ENCODE measurements at regions of chr16 and their contacts with region 1.

Region 1: GRCh38 chr16:57757326-57757786 is 21.8 kb downstream of the KATNB1 start:
- DNase-seq: no peak
- ATAC-seq: peak; percentile 96
- H3K4me3 ChIP-seq: no peak overlapping the region
- H3K27ac ChIP-seq: no peak overlapping the region
- H3K4me1 ChIP-seq: peaks cover 0 to 3% of the 10 kb centered on the region in 2 experiments; a peak in 1 of 4 replicates
- H3K27me3 ChIP-seq: no peaks in the 10 kb centered on the region
- CTCF ChIP-seq: peak; percentile 92 to 97 (median 93)
- POLR2A ChIP-seq: no peak
- RAD21 ChIP-seq: peak; percentile 99

Region 2: DNA sequence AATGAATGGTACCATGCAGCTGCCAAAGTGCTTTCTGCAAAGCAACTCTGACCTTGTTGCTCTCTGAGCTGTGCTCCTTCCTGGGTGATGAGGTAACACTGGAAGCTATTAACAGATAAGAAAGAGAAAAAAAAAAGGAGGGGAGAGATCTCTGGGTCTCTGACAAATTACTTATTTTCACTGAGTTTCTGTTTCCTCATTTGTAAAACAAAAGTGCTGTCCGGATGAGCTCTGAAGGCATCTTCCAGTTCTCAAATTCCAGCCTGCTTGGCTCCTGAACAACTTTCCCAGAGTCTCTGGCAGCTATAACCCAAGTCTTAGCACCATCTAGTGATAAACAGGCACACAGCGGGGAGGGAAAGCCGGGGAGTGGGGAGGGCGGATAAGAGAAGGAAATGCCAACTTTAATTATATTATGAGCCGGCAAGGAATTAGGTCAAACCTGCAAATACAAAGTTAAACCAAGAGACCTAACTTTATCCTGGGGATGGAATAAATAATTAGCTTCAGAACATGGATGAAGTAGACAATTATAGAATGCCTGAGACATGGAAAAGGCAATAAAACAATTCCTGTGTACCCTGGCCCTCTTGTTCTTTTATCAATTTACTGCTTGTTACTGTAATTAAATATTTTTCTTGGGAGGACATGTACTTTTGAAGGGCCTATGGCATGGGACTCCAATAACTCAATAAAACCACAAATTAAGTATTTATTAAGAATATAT is 106.2 kb after region 1 on chr16:
- CTCF ChIA-PET with region 1: interaction called, 18 read pairs
- POLR2A ChIA-PET with region 1: no interaction called
- RAD21 ChIA-PET with region 1: interaction called in 1 of 2 experiments, 5 read pairs
- intact Hi-C with region 1: loop called (anchors 1 kb)
- DNase-seq: peak; percentile 45
- ATAC-seq: peak; percentile 84
- H3K4me3 ChIP-seq: no peak overlapping the region
- H3K27ac ChIP-seq: no peak overlapping the region
- H3K4me1 ChIP-seq: peaks cover 13 to 36% of the 10 kb centered on the region in 2 experiments; a peak in 3 of 4 replicates
- H3K27me3 ChIP-seq: no peaks in the 10 kb centered on the region
- CTCF ChIP-seq: peak; percentile 58 to 97 (median 70)
- POLR2A ChIP-seq: no peak
- RAD21 ChIP-seq: peak; percentile 96

Region 3: DNA sequence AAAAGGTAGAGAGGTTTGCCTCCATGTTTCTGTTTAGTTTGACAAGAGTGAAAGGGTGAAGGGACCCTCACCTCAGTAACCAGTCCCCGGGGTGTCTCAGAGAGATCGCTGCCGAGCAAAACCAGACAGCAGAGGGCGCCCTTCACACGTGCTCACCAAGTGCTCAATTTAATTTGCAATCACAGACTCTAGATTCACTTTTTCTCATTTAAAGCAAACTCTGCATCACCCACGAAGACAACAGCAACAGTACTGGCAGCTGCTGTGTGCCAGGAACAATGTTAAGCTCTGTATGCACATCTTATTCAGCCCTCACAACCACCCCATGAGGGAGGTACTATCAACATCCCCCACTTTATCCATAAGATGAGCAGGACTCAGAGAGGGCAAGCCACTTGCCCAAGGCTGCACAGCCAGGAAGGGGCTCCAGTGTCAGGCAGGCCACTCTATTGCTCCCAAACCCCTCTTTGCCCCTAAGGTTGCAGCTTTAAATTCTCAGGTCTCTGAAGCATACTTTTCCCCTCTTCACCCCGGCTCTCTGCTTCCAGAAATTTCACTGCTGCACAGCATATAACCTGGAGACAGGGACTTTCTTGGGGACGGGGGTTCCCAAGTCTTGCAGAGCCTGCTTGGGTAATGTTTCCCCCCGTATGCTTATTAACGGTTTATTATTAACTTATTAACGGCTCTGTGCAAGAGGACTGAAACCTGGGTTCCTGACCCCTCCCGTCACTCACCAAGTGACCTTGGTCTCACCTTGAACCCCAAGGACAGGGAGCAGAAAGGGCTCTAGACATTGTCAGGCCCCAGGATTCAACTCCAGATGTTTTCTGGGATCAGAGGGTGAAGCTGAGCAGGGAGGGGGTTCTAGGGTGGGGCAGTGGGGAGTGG is 142.7 kb after region 1 on chr16:
- CTCF ChIA-PET with region 1: interaction called, 3 read pairs
- POLR2A ChIA-PET with region 1: no interaction called
- RAD21 ChIA-PET with region 1: no interaction called
- intact Hi-C with region 1: loop called (anchors 10 kb)
- DNase-seq: peak; percentile 59
- ATAC-seq: peak; percentile 85
- H3K4me3 ChIP-seq: no peak overlapping the region
- H3K27ac ChIP-seq: no peak overlapping the region
- H3K4me1 ChIP-seq: peaks cover 0 to 13% of the 10 kb centered on the region in 2 experiments; a peak in 2 of 4 replicates
- H3K27me3 ChIP-seq: no peaks in the 10 kb centered on the region
- CTCF ChIP-seq: peak; percentile 86 to 92 (median 88)
- POLR2A ChIP-seq: no peak
- RAD21 ChIP-seq: peak; percentile 91

Region 4: DNA sequence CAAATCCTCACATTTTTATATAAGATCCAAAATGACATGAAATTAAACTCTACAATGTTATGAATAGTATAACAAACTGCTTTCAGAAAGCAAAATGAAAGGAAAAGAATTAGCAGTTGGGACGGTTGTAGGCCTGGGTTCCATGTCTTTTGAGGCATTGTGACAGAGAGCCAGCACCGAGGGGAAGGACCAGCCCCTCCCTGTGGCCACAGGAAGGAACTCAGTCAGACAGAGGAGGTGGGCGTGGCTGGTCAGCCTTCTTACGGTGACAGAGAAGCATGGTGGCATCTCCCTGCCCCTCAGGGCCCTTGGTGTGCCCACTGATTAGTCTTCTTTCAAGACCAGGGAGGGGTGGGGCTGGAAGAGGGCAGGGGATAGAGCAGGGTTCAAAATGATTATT is 237.4 kb after region 1 on chr16:
- CTCF ChIA-PET with region 1: interaction called, 3 read pairs
- POLR2A ChIA-PET with region 1: no interaction called
- RAD21 ChIA-PET with region 1: no interaction called
- intact Hi-C with region 1: loop called (anchors 2 kb)
- DNase-seq: peak; percentile 37
- ATAC-seq: peak; percentile 89
- H3K4me3 ChIP-seq: no peak overlapping the region
- H3K27ac ChIP-seq: no peak overlapping the region
- H3K4me1 ChIP-seq: peaks cover 13 to 27% of the 10 kb centered on the region in 2 experiments; a peak in 3 of 4 replicates
- H3K27me3 ChIP-seq: no peaks in the 10 kb centered on the region
- CTCF ChIP-seq: peak; percentile 58 to 69 (median 65); a peak in 5 of 6 replicates
- POLR2A ChIP-seq: no peak
- RAD21 ChIP-seq: peak; percentile 64

Measured in HCT116 (cell line).